GM12878 (cell line): ENCODE measurements at regions of chr3 and their contacts with region 1.

Region 1: DNA sequence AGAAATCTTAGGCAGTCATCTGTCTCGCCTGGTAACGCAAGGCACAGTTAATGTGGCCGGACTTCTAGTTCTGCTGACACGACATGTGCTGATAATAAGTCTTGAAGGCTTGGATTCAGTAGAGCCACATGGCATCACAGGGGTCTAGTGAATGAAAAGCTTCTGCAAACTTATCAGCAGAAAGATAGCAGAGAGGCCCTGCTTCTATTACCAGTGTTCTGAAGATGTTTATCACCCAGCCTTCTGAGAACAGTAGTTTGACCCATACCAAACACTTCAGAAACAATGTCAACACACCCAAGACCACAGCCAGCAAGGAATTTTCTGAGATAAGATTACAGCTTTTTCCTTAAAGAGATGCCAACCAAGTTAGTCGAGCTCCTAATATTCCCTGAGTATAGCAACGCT is 102.7 kb upstream of the UMPS start:
- DNase-seq: no peak
- ATAC-seq: no peak
- H3K4me3 ChIP-seq: no peak overlapping the region
- H3K27ac ChIP-seq: no peak overlapping the region
- H3K4me1 ChIP-seq: peaks cover 7% of the 10 kb centered on the region; the same call in 1 of the 2 replicates
- H3K27me3 ChIP-seq: no peaks in the 10 kb centered on the region
- CTCF ChIP-seq: no peak
- EP300 ChIP-seq: no peak
- POLR2A ChIP-seq: no peak
- RAD21 ChIP-seq: no peak

Region 2: GRCh38 chr3:124639406-124640237 is 12.1 kb after region 1 on chr3:
- CTCF ChIA-PET with region 1: interaction called, 3 read pairs
- POLR2A ChIA-PET with region 1: interaction called, 7 read pairs
- RAD21 ChIA-PET with region 1: interaction called, 6 read pairs
- SMC1A ChIA-PET with region 1: interaction called, 19 read pairs
- in situ Hi-C with region 1: no loop called
- intact Hi-C with region 1: no loop called
- DNase-seq: peak; percentile 77
- ATAC-seq: peak; percentile 81
- H3K4me3 ChIP-seq: no peak overlapping the region; the same call in 1 of the 2 replicates
- H3K27ac ChIP-seq: peak overlapping the region; percentile 40
- H3K4me1 ChIP-seq: peaks cover 23% of the 10 kb centered on the region
- H3K27me3 ChIP-seq: no peaks in the 10 kb centered on the region
- CTCF ChIP-seq: no peak
- EP300 ChIP-seq: peak in 1 of 2 experiments; percentile 47; a peak in 2 of 4 replicates
- POLR2A ChIP-seq: no peak
- RAD21 ChIP-seq: no peak